Cardiac septum (tissue), 1 donor: ENCODE measurements at regions of chr3 and their contacts with region 1.

Region 1: DNA sequence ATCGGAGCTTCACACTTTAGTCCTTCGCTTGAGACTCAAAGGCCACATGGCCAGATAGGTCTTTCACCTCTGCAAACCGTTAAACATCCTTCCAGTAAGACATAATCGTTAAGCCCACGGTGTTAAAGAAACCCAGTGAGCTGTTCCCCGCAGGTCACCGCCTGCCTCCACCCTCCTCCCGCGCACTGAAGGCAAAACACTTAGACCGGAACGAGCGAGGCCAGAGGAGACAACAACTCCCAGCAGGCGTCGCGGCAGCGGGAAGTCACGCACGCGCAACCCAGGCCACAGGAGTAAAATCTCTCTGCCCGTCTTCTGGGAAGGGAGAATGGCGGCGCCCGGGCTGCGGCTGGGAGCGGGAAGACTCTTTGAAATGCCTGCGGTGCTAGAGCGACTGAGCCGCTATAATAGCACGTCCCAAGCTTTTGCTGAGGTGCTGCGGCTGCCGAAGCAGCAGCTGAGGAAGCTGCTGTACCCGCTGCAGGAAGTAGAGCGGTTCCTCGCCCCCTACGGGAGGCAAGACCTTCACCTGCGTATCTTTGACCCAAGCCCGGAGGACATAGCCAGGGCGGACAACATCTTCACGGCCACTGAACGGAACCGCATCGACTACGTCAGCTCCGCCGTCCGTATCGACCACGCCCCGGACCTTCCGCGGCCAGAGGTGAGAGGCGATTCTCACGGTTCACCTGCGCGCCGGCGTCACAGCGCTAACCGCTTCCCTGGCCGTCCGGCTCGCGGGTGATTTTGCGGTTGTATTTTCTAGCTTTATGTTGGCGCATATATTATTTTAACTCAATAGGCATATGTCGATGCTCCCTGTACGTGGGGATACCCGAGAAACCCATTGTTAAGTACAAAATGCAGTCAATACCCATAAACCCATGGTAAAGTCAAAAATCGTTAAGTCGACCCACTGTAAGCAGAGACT is at the start of gene GTPBP8:
- DNase-seq: peak; percentile 97
- total RNA-seq, gene GTPBP8: 18.3 TPM

Region 2: GRCh38 chr3:112561731-112562688 is 428.9 kb before region 1 on chr3 and contains the starts of genes ATG3 and SLC35A5:
- intact Hi-C with region 1: loop called (anchors 5 kb)
- DNase-seq: peak; percentile 100
- total RNA-seq, gene ATG3: 41.0 TPM
- total RNA-seq, gene SLC35A5: 18.6 TPM

Region 3: GRCh38 chr3:113019182-113020137 is 28.5 kb after region 1 on chr3:
- intact Hi-C with region 1: loop called (anchors 2 kb)
- DNase-seq: peak; percentile 93